Naive thymus-derived CD4-positive, alpha-beta T cell (primary cell): ENCODE measurements at regions of chr2 and their contacts with region 1.

Region 1: GRCh38 chr2:196171248-196171871 is at the start of gene STK17B:
- DNase-seq: peak; percentile 92 to 97 (median 95)
- ATAC-seq: peak; percentile 81
- H3K4me3 ChIP-seq: peak within 1 kb of the TSS; percentile 78
- H3K4me3 Mint-ChIP-seq: peak within 1 kb of the TSS; percentile 87 to 98 (median 94)
- H3K27ac ChIP-seq: peak within 1 kb of the TSS; percentile 98
- H3K27ac Mint-ChIP-seq: peak within 1 kb of the TSS; percentile 89 to 98 (median 96)
- H3K4me1 ChIP-seq: peaks cover 29 to 37% of the 10 kb centered on the region in 2 donors
- H3K4me1 Mint-ChIP-seq: peaks cover 19 to 43% (median 38%) of the 10 kb centered on the region in 7 donors
- H3K27me3 ChIP-seq: no peaks in the 10 kb centered on the region
- H3K27me3 Mint-ChIP-seq: peaks cover 0 to 2% (median 0%) of the 10 kb centered on the region in 5 donors
- total RNA-seq, gene STK17B: 274 to 513 (median 338) TPM

Region 2: DNA sequence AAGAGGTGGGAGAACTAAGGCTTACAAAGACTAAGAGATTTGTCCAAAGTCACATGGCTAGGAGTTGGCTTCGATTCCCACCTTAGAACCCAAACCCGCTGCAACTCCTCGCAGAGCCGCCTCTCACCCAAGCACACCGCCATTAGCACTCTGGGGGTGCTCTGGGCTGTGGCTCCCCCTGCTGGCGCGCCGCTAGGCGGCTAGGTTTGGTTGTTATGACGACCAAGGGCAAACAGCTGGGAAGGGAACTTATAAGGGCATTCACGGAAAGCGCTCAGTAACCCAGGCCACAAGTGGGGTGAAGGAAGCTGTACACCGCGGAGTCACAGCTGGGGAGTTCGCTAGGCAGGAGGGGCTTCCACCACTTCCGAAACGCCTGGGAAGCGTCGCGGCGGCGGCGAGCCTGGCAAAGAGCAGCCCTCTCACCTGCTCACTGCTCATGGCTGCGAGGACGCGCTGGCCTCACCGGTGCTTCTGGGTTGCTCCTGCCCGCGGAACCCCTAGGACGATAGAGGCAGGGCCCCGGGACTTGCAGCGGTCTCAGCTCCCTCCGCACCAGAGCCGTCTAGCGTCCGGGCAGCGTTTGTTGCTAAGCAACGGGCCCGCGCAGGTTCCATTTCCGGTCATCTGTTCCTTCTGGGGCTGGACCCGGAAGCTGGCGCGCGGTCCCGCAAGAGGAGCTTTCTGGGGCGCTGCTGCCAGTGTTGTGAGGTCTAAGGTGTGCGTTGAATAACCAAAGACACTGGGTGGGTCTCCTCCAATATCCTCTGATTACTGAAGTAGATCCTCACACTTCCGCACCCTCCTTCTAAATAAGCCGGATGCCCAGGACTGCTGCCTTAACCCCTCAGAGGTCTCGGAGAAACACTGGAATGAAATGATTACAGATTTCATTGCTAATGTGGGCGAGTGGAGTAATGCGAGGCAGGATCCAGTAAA is 102.8 kb before region 1 on chr2 and contains the start of gene DNAH7:
- CTCF ChIA-PET with region 1: no interaction called
- POLR2A ChIA-PET with region 1: interaction called, 4 read pairs
- intact Hi-C with region 1: loop called in 1 of 2 experiments (anchors 2 kb)
- DNase-seq: peak; percentile 84 to 94 (median 92)
- ATAC-seq: peak; percentile 96
- H3K4me3 ChIP-seq: peak within 1 kb of the TSS; percentile 69
- H3K4me3 Mint-ChIP-seq: peak within 1 kb of the TSS; percentile 77 to 92 (median 88)
- H3K27ac ChIP-seq: peak within 1 kb of the TSS; percentile 45
- H3K27ac Mint-ChIP-seq: peak within 1 kb of the TSS; percentile 75 to 94 (median 86)
- H3K4me1 ChIP-seq: peaks cover 6% of the 10 kb centered on the region in 2 donors
- H3K4me1 Mint-ChIP-seq: peaks cover 6 to 16% (median 12%) of the 10 kb centered on the region in 7 donors
- H3K27me3 ChIP-seq: peaks cover 0 to 3% of the 10 kb centered on the region in 2 donors
- H3K27me3 Mint-ChIP-seq: peaks cover 0 to 33% (median 3%) of the 10 kb centered on the region in 5 donors
- total RNA-seq, gene DNAH7: not detected

Region 3: GRCh38 chr2:196149948-196150347 is 21.4 kb before region 1 on chr2:
- CTCF ChIA-PET with region 1: interaction called, 4 read pairs
- POLR2A ChIA-PET with region 1: interaction called, 87 read pairs
- intact Hi-C with region 1: no loop called
- DNase-seq: peak in 2 of 9 donors; percentile 19 to 49
- ATAC-seq: peak; percentile 48
- H3K4me3 ChIP-seq: no peak overlapping the region
- H3K4me3 Mint-ChIP-seq: peak overlapping the region; percentile 1 to 87 (median 72)
- H3K27ac ChIP-seq: peak overlapping the region; percentile 71
- H3K27ac Mint-ChIP-seq: peak overlapping the region; percentile 81 to 95 (median 90)
- H3K4me1 ChIP-seq: peaks cover 63 to 86% of the 10 kb centered on the region in 2 donors
- H3K4me1 Mint-ChIP-seq: peaks cover 49 to 99% (median 94%) of the 10 kb centered on the region in 7 donors
- H3K27me3 ChIP-seq: no peaks in the 10 kb centered on the region
- H3K27me3 Mint-ChIP-seq: no peaks in the 10 kb centered on the region

Region 4: DNA sequence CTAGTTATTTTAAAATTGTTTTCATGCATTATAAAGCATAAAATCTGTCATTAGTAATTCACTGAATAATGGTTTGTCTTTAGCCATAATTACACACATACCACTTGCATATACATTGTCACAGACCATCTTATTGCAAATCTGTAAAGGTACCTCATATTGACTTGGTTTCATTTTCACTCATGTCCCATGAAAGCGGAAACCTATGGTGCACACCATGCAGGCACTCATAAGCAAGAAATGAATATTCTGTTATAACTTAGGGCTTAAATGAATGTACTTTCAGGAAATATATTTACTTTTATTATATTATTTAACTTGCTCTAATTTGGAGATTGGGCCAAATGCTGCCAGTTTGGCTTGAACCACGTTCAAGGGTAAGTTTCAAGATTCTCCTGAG is 29.2 kb after region 1 on chr2:
- CTCF ChIA-PET with region 1: interaction called, 4 read pairs
- POLR2A ChIA-PET with region 1: interaction called, 89 read pairs
- intact Hi-C with region 1: no loop called
- DNase-seq: peak in 3 of 9 donors; percentile 34 to 49 (median 43)
- ATAC-seq: peak; percentile 78
- H3K4me3 ChIP-seq: peak overlapping the region; percentile 45
- H3K4me3 Mint-ChIP-seq: peak overlapping the region; percentile 41 to 83 (median 75)
- H3K27ac ChIP-seq: peak overlapping the region; percentile 65
- H3K27ac Mint-ChIP-seq: peak overlapping the region; percentile 54 to 94 (median 87)
- H3K4me1 ChIP-seq: peaks cover 28 to 34% of the 10 kb centered on the region in 2 donors
- H3K4me1 Mint-ChIP-seq: peaks cover 20 to 71% (median 53%) of the 10 kb centered on the region in 7 donors
- H3K27me3 ChIP-seq: no peaks in the 10 kb centered on the region
- H3K27me3 Mint-ChIP-seq: no peaks in the 10 kb centered on the region

Region 5: DNA sequence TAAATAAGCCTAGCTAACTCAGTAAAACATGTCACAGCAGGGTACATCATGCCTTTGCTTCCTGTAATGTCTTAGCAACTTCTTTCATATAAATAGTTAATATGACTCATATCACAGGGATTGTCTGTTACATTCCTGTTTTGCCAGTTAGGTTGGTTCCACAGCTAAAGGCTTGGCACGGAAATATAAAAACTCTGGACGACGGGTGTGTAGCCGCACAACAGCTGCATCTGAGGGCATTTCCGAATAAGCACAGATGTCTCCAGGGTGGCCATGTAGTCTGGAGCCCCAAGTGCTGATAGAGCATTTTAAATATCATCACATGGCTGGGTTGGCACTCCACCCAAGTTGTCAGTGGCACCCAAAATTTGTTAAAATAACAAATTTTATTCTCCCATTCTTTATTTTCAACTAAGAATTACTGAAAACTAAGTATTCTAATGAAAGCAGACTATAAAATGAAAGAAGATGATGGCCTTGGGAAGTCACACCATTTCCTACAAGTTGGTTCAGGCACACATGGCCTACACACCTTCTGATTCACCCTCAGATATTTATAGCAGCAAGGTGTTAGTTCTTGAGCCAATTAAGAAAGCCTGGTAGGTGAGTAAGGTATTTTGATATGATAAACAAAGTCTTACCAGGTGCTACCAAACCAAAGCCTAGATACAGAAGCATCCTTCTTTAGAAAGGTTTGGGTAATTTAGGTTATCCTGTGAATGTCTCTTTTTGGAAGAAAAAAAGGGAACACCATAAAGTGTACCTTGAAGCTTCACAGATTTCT is 61.9 kb after region 1 on chr2:
- CTCF ChIA-PET with region 1: interaction called, 3 read pairs
- POLR2A ChIA-PET with region 1: interaction called, 38 read pairs
- intact Hi-C with region 1: loop called in 1 of 2 experiments (anchors 1 kb)
- DNase-seq: no peak
- ATAC-seq: no peak
- H3K4me3 ChIP-seq: peak overlapping the region; percentile 19
- H3K4me3 Mint-ChIP-seq: peak overlapping the region in 8 of 10 donors; percentile 29 to 71 (median 46)
- H3K27ac ChIP-seq: peak overlapping the region; percentile 84
- H3K27ac Mint-ChIP-seq: peak overlapping the region; percentile 89 to 99 (median 97)
- H3K4me1 ChIP-seq: peaks cover 31 to 72% of the 10 kb centered on the region in 2 donors
- H3K4me1 Mint-ChIP-seq: peaks cover 36 to 97% (median 89%) of the 10 kb centered on the region in 7 donors
- H3K27me3 ChIP-seq: no peaks in the 10 kb centered on the region
- H3K27me3 Mint-ChIP-seq: no peaks in the 10 kb centered on the region

Region 6: GRCh38 chr2:196413821-196414274 is 242.5 kb after region 1 on chr2:
- CTCF ChIA-PET with region 1: no interaction called
- POLR2A ChIA-PET with region 1: no interaction called
- intact Hi-C with region 1: no loop called
- DNase-seq: no peak
- ATAC-seq: no peak
- H3K4me3 ChIP-seq: no peak overlapping the region
- H3K4me3 Mint-ChIP-seq: no peak overlapping the region
- H3K27ac ChIP-seq: no peak overlapping the region
- H3K27ac Mint-ChIP-seq: no peak overlapping the region
- H3K4me1 ChIP-seq: peaks cover 0 to 5% of the 10 kb centered on the region in 2 donors
- H3K4me1 Mint-ChIP-seq: peaks cover 6 to 16% (median 9%) of the 10 kb centered on the region in 7 donors
- H3K27me3 ChIP-seq: peaks cover 0 to 3% of the 10 kb centered on the region in 2 donors
- H3K27me3 Mint-ChIP-seq: peaks cover 4 to 20% (median 15%) of the 10 kb centered on the region in 5 donors

Region 7: DNA sequence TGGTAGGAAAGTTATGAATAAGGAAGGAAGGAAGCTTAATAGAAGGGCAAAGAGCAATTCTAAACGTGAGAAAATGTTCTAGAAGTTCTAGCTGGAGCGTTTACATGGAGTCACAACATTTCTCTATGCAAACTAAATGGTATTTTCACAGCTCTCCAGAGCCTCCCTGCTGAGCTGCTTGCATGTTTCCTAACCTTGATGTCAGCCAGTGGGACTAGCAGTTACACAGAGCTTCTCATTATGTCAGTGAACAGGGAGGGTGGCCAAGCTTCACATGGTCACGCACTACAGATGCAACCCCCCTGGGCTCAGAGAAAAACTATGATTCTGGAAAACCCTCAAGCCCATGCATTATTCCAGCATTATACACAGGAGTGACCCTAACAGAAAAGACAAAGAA is 314.8 kb after region 1 on chr2:
- CTCF ChIA-PET with region 1: no interaction called
- POLR2A ChIA-PET with region 1: no interaction called
- intact Hi-C with region 1: no loop called
- DNase-seq: no peak
- ATAC-seq: no peak
- H3K4me3 ChIP-seq: no peak overlapping the region
- H3K4me3 Mint-ChIP-seq: no peak overlapping the region
- H3K27ac ChIP-seq: no peak overlapping the region
- H3K27ac Mint-ChIP-seq: no peak overlapping the region
- H3K4me1 ChIP-seq: no peaks in the 10 kb centered on the region
- H3K4me1 Mint-ChIP-seq: no peaks in the 10 kb centered on the region
- H3K27me3 ChIP-seq: peaks cover 0 to 4% of the 10 kb centered on the region in 2 donors
- H3K27me3 Mint-ChIP-seq: peaks cover 20 to 42% (median 35%) of the 10 kb centered on the region in 5 donors

Region 8: GRCh38 chr2:196926562-196927375 is 755.4 kb after region 1 on chr2 and contains the start of gene PGAP1:
- CTCF ChIA-PET with region 1: no interaction called
- POLR2A ChIA-PET with region 1: no interaction called
- intact Hi-C with region 1: loop called in 1 of 2 experiments (anchors 10 kb)
- DNase-seq: peak; percentile 66 to 95 (median 72)
- ATAC-seq: peak; percentile 89
- H3K4me3 ChIP-seq: peak within 1 kb of the TSS; percentile 91
- H3K4me3 Mint-ChIP-seq: peak within 1 kb of the TSS; percentile 85 to 100 (median 96)
- H3K27ac ChIP-seq: peak within 1 kb of the TSS; percentile 79
- H3K27ac Mint-ChIP-seq: peak within 1 kb of the TSS; percentile 90 to 97 (median 94)
- H3K4me1 ChIP-seq: peaks cover 4 to 6% of the 10 kb centered on the region in 2 donors
- H3K4me1 Mint-ChIP-seq: peaks cover 22 to 43% (median 39%) of the 10 kb centered on the region in 7 donors
- H3K27me3 ChIP-seq: no peaks in the 10 kb centered on the region
- H3K27me3 Mint-ChIP-seq: peaks cover 0 to 2% (median 0%) of the 10 kb centered on the region in 5 donors
- total RNA-seq, gene PGAP1: 6.0 to 48.4 (median 6.9) TPM

Region 9: GRCh38 chr2:196939187-196939770 is 767.9 kb after region 1 on chr2:
- CTCF ChIA-PET with region 1: no interaction called
- POLR2A ChIA-PET with region 1: no interaction called
- intact Hi-C with region 1: no loop called
- DNase-seq: no peak
- ATAC-seq: no peak
- H3K4me3 ChIP-seq: no peak overlapping the region
- H3K4me3 Mint-ChIP-seq: no peak overlapping the region
- H3K27ac ChIP-seq: no peak overlapping the region
- H3K27ac Mint-ChIP-seq: no peak overlapping the region
- H3K4me1 ChIP-seq: no peaks in the 10 kb centered on the region
- H3K4me1 Mint-ChIP-seq: peaks cover 0 to 14% (median 0%) of the 10 kb centered on the region in 7 donors
- H3K27me3 ChIP-seq: no peaks in the 10 kb centered on the region
- H3K27me3 Mint-ChIP-seq: peaks cover 0 to 4% (median 0%) of the 10 kb centered on the region in 5 donors

Region 10: DNA sequence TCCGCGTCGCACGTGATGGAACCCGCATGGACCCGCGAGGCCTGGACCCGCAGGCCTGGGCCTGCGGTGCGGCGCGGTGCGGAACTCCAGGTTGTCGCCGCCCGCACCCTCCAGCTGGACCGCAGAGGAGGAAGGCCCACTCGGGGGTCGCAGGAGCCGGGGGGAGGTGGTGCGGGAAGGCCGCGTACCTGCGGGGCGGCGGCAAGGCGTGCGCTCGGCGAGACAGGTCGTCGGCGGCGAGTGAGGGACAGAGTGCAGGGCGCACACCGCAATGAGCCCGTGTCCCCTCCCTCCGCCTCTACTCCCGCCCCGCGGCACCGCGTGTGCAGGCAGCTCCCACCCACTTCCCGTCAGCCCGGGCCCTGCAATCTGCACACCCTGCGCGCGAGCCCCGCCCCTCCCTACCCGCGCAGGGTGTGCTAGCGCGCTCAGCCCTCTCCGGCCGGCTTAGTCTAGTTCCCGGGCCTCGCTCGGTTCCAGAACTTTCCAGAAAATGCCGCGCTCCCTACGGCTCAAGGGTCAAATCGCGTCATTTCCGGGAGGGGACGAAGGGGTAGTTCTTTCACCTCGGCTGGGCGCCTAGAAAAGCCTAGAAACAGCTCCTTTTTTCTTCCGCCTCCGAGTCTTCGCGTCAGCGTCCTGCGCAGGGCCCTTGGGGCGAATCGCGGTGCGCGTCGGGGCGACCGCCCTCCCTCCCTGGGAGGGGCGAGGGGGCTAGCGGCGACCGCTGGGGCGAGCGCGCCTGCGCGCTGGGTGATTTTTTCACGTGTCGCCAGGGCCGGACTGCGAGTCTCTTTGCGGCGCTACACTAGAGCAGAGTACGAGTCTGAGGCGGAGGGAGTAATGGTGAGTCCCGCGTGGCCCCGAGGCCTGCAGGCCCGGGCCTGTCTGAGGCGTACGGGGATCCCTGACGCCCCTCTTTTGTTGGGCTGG is 1328.5 kb after region 1 on chr2 and contains the starts of genes HSPD1 and HSPE1:
- CTCF ChIA-PET with region 1: no interaction called
- POLR2A ChIA-PET with region 1: no interaction called
- intact Hi-C with region 1: loop called in 1 of 2 experiments (anchors 10 kb)
- DNase-seq: peak; percentile 89 to 98 (median 97)
- ATAC-seq: peak; percentile 93
- H3K4me3 ChIP-seq: peak within 1 kb of the TSS; percentile 94
- H3K4me3 Mint-ChIP-seq: peak within 1 kb of the TSS; percentile 84 to 100 (median 94)
- H3K27ac ChIP-seq: peak within 1 kb of the TSS; percentile 90
- H3K27ac Mint-ChIP-seq: peak within 1 kb of the TSS; percentile 83 to 98 (median 95)
- H3K4me1 ChIP-seq: peaks cover 17 to 41% of the 10 kb centered on the region in 2 donors
- H3K4me1 Mint-ChIP-seq: peaks cover 31 to 69% (median 57%) of the 10 kb centered on the region in 7 donors
- H3K27me3 ChIP-seq: no peaks in the 10 kb centered on the region
- H3K27me3 Mint-ChIP-seq: no peaks in the 10 kb centered on the region
- total RNA-seq, gene HSPD1: 127 to 276 (median 137) TPM
- total RNA-seq, gene HSPE1: 46.3 to 127 (median 52.2) TPM